ENCODE measurements at regions of chr10 and their contacts with region 1.

Region 1: DNA sequence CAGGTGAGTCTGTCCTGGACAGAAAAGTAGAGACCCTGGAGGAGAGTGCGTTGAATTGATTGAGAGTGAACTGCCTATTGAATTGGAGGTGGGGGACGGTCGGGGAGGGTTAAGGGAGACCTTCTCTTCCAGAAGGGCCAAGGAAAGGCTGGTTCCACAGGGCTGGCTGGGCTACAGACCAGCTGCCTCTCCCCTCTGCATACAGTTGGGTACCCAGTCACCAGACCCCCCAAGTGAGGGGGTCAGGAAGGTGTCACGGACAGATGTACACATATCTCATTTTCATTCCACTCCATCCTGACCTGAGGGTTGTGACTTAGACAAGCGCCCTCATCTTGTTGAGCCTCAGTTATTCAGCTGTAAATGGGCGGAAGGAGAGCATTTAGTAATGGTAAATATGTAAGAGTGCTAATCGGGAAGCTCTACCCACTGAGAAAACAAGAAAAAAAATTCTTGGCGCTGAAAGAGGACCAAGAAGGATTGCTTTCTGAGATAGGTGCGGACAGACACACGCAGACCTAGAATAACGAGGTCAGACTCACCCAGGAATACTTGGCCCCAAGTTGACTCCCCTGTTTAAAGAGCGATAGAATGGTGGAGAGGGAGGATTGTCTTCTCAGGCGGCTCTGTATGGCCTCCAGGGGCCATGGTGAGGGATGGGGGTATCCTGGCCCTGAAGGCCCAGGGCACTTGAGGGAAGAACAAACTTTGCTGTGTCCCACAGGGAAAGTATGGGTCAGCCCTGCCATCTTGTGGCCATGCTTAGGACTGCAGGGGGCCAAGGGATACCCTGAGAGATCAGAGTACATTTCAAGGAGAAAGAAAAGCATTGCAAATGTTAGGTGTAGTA is 7.2 kb upstream of the MBL2 start:
- DNase-seq: peak in 1 of 2 experiments; percentile 73
- H3K4me3 ChIP-seq: no peak overlapping the region
- H3K27ac ChIP-seq: no peak overlapping the region
- H3K4me1 ChIP-seq: no peaks in the 10 kb centered on the region
- H3K27me3 ChIP-seq: no peaks in the 10 kb centered on the region
- CTCF ChIP-seq: peak; percentile 99

Region 2: GRCh38 chr10:52566471-52567246 is 213.1 kb before region 1 on chr10:
- CTCF ChIA-PET with region 1: no interaction called
- POLR2A ChIA-PET with region 1: no interaction called
- intact Hi-C with region 1: loop called (anchors 5 kb)
- DNase-seq: peak; percentile 25 to 60
- H3K4me3 ChIP-seq: no peak overlapping the region
- H3K27ac ChIP-seq: no peak overlapping the region
- H3K4me1 ChIP-seq: peaks cover 7% of the 10 kb centered on the region
- H3K27me3 ChIP-seq: no peaks in the 10 kb centered on the region
- CTCF ChIP-seq: peak; percentile 78

Region 3: DNA sequence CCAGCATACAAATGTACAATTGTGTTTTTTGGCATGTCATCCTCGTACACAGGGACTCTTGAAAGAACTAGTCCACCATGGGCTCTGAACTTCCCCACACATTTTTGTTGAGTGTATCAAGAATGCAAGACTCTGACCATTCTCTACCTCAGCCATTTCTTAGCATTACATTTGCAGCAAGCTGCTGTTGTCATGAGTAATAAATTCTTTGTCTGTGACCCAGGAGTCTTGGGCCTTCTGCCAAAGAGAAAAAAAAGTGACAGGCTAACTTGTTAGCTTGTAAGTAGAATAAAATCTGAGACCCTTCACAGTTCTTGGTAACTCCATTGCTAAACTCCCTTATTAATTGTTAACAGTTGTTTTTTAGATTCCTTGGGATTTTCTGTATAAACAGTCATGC is 535.1 kb after region 1 on chr10:
- CTCF ChIA-PET with region 1: no interaction called
- POLR2A ChIA-PET with region 1: interaction called, 15 read pairs
- intact Hi-C with region 1: no loop called
- DNase-seq: peak; percentile 67 to 76
- H3K4me3 ChIP-seq: no peak overlapping the region
- H3K27ac ChIP-seq: no peak overlapping the region
- H3K4me1 ChIP-seq: no peaks in the 10 kb centered on the region
- H3K27me3 ChIP-seq: no peaks in the 10 kb centered on the region
- CTCF ChIP-seq: no peak

Measured in PC-9 (cell line).